Activated T-helper 1 cell treated with anti-CD3 and anti-CD28 coated beads, Interleukin-12 subunit alpha, Interleukin-12 subunit beta, Interleukin-2, Interleukin-4 antibody, amounts not matched to agents 30 ng/mL and 10 ng/mL and 1 ng/mL, durations not matched to agents 14 hours and 24 hours and 36 hours (primary cell): ENCODE measurements at regions of chr4 and their contacts with region 1.

Region 1: GRCh38 chr4:75673027-75673958 is at the start of gene G3BP2:
- DNase-seq: peak; percentile 96
- H3K4me3 Mint-ChIP-seq: peak within 1 kb of the TSS; percentile 96
- H3K27ac Mint-ChIP-seq: peak within 1 kb of the TSS; percentile 98
- H3K4me1 Mint-ChIP-seq: peaks cover 40% of the 10 kb centered on the region
- H3K27me3 Mint-ChIP-seq: no peaks in the 10 kb centered on the region
- total RNA-seq, gene G3BP2: 143 and 144 TPM in 2 replicates

Region 2: DNA sequence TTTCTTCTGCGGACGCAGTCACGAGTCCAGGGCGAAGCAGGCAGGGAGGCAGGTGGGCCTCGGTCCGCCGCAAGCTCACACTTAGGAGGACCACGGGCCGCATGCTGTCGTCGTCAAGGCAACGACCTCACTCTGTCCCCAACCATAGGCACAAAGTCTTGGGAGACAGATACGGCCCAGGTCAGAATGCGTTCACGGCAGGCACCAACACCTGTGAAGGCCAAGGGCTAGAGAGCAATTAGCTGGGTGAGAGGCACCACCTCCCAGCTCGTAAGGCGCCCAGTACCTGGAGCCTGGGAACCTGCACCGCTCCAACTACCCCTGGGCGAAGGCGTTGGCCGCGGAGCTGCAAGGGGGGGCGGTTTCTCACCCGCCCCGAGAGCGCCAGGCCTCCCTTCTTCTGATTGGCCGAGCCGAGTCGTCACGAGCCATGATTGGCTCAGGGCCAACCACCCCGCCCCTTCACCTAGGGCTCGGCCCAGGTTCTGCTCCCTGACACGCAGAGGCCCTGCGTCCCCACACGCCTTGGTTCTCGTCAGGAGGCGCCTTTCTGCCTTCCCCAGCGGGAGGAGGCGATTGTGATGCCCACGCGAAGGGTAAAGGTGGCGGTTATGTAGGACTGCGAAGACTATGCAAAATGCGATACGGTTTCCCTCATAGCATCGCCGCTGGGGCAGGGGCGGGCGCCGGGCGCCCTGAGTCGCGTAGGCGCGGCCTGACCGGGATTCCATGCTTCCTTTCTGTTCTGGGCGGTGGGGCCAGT is 42.9 kb before region 1 on chr4 and contains the start of gene CDKL2:
- intact Hi-C with region 1: loop called (anchors 1 kb)
- DNase-seq: peak; percentile 89
- H3K4me3 Mint-ChIP-seq: peak within 1 kb of the TSS; percentile 86
- H3K27ac Mint-ChIP-seq: peak within 1 kb of the TSS; percentile 40
- H3K4me1 Mint-ChIP-seq: peaks cover 20% of the 10 kb centered on the region
- H3K27me3 Mint-ChIP-seq: peaks cover 11% of the 10 kb centered on the region
- total RNA-seq, gene CDKL2: 0.16 and 0.22 TPM in 2 replicates

Region 3: GRCh38 chr4:75686346-75686745 is 13.1 kb after region 1 on chr4:
- intact Hi-C with region 1: loop called (anchors 1 kb)
- DNase-seq: no peak
- H3K4me3 Mint-ChIP-seq: no peak overlapping the region
- H3K27ac Mint-ChIP-seq: no peak overlapping the region
- H3K4me1 Mint-ChIP-seq: peaks cover 30% of the 10 kb centered on the region
- H3K27me3 Mint-ChIP-seq: peaks cover 2% of the 10 kb centered on the region

Region 4: GRCh38 chr4:75698162-75698962 is 25.1 kb after region 1 on chr4:
- intact Hi-C with region 1: loop called (anchors 1 kb)
- DNase-seq: no peak
- H3K4me3 Mint-ChIP-seq: peak overlapping the region; percentile 7
- H3K27ac Mint-ChIP-seq: peak overlapping the region; percentile 86
- H3K4me1 Mint-ChIP-seq: peaks cover 30% of the 10 kb centered on the region
- H3K27me3 Mint-ChIP-seq: no peaks in the 10 kb centered on the region